Mammary epithelial cell (primary cell): ENCODE measurements at regions of chr12 and their contacts with region 1.

Region 1: DNA sequence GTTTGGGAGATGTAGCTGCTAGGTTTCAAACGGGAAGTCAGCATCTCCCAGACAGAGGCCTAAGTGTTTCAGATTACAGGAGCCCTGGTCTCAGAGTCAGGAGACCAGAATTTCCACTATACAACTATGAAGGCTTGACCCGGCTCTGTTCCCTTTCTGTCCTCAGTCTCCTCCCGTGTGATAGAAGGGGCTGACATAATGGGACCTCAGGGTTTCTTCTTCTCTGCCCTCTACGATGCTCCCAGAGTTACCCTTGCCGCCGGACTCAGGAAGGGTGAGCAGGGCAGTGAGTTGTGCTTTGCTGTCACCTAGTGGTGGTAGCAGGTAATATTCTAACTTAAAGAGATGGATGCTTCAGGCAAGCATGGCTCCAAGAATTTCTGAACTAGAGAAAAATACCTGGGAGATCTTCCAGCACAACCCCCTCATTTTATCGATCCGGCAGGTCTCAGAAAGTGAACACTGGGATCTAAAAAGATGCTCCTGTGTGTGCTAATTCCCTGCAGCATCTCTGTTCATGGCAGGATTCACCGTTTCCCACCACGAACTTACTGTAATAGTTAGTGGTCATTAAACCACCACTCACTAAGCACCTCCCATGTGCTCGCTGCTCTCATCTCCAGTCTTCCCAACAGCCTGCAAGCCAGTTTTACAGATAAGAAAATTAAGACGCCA is 84.4 kb downstream of the VWF start:
- DNase-seq: peak; percentile 48
- H3K4me3 ChIP-seq: no peak overlapping the region
- H3K27ac ChIP-seq: no peak overlapping the region
- H3K4me1 ChIP-seq: peaks cover 8% of the 10 kb centered on the region
- H3K27me3 ChIP-seq: no peaks in the 10 kb centered on the region
- CTCF ChIP-seq: peak; percentile 93 to 98

Region 2: DNA sequence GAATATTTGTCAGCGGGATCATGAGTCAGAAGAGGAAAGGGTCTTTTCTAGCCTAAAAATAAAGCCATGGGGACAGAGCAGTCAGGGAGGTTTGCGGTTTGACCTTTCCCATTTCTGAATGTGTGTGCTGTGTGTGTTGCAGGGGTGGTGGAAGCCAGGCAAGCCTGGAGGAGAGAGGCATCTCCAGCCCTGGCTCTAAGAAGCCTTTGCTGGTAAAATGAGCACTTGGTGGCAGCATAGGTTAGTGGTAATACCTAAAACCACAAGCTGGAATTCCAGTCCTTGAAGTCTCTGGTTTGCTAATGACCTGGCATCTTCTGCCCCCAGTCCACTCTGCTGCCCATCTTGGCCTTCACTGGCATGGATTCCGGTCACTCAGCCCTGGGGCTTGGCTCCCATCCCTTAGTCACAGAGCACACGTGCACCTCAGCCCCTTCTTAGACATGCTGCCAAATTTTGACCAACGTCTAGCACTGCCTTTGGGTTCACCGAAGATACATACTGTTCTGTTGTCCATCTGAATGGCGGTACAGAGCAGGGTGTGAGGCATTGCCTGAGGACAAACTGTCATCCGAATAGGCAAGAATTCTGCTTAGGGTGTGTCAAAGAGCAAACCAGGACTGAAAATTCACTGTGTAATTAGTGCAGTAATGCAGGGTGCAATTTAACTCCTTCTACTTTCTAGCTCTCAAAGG is 943.6 kb before region 1 on chr12:
- CTCF ChIA-PET with region 1: no interaction called
- dilution Hi-C with region 1: no loop called
- in situ Hi-C with region 1: no loop called
- intact Hi-C with region 1: loop called (anchors 5 kb)
- DNase-seq: peak; percentile 38
- H3K4me3 ChIP-seq: no peak overlapping the region
- H3K27ac ChIP-seq: no peak overlapping the region
- H3K4me1 ChIP-seq: peaks cover 3% of the 10 kb centered on the region
- H3K27me3 ChIP-seq: peaks cover 5% of the 10 kb centered on the region
- CTCF ChIP-seq: peak; percentile 9 to 44

Region 3: DNA sequence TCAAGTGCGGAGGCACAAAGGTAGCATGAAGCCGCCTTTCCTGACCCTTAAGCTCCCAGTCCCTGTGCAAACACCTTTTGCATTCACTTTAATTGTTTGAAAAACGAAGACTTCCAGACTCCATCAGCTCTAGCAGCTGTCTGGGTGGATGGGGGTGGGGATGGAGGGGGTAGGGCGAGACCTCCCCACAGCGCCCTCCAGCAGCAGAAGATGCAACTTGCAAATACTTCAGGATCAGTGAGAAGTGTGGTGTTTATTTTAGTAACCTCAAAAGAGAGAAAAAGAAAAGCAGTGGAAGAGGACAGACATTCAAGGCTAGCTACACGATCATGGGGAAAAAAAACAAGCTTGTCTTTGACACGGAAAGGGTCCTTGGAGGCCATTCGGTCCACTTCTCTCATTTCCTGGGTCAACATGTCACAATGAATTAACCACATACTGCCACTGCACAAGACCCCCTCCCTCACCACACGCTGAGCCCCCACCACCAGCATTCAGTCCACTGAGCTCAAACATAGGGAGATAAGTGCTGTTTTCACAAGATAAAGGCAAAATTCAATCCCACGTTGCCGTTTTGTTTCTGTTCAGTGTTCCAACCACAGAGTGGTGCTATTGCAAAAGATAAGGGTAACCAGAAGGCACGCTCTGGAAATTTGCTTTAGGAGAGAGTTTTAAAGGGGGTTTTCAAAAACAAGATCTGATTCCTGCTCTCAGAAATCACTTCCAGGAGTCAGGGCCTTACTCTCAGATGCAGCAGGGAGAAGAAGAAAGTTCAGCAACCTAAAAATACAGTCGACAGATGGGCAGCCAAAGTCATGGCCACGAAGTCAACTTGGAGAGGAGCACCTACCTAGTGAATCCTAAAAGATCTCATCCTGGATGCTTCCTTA is 611.5 kb before region 1 on chr12:
- CTCF ChIA-PET with region 1: no interaction called
- dilution Hi-C with region 1: no loop called
- in situ Hi-C with region 1: no loop called
- intact Hi-C with region 1: loop called (anchors 5 kb)
- DNase-seq: no peak
- H3K4me3 ChIP-seq: no peak overlapping the region
- H3K27ac ChIP-seq: no peak overlapping the region
- H3K4me1 ChIP-seq: peaks cover 7% of the 10 kb centered on the region
- H3K27me3 ChIP-seq: peaks cover 33% of the 10 kb centered on the region
- CTCF ChIP-seq: peak; percentile 5 to 39

Region 4: GRCh38 chr12:5965950-5966383 is 74.1 kb before region 1 on chr12:
- CTCF ChIA-PET with region 1: no interaction called
- dilution Hi-C with region 1: no loop called
- in situ Hi-C with region 1: no loop called
- intact Hi-C with region 1: loop called (anchors 1 kb)
- DNase-seq: peak; percentile 27
- H3K4me3 ChIP-seq: no peak overlapping the region
- H3K27ac ChIP-seq: no peak overlapping the region
- H3K4me1 ChIP-seq: no peaks in the 10 kb centered on the region
- H3K27me3 ChIP-seq: no peaks in the 10 kb centered on the region
- CTCF ChIP-seq: peak; percentile 82 to 87